ENCODE measurements at regions of chr7 and their contacts with region 1.

Region 1: GRCh38 chr7:134646425-134647305 is at the start of gene BPGM:
- DNase-seq: peak; percentile 98
- H3K4me3 Mint-ChIP-seq: no peak within 1 kb of the TSS
- H3K27ac Mint-ChIP-seq: no peak within 1 kb of the TSS
- H3K4me1 Mint-ChIP-seq: peaks cover 32% of the 10 kb centered on the region
- H3K27me3 Mint-ChIP-seq: no peaks in the 10 kb centered on the region
- total RNA-seq, gene BPGM: 23.7 to 24.9 TPM

Region 2: DNA sequence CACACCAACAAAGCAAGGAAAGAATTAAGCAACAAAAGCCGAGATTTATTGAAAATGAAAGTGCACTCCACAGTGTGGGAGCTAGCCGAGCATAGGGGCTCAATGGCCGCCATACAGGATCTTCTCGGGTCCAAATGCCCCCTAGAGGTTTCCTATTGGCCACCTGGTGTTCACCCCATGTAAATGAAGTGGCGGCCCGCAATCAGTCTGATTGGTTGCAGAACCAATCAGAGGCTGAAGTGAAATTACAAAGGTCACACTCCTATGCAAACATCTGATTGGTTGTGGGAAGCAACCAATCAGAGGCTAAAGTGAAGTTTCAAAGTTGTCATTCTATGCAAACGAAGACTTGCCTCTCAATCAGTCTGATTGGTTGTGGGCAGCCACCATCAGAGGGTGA is 268.1 kb before region 1 on chr7:
- CTCF ChIA-PET with region 1: no interaction called
- POLR2A ChIA-PET with region 1: no interaction called
- intact Hi-C with region 1: no loop called
- DNase-seq: no peak
- H3K4me3 Mint-ChIP-seq: no peak overlapping the region
- H3K27ac Mint-ChIP-seq: no peak overlapping the region
- H3K4me1 Mint-ChIP-seq: no peaks in the 10 kb centered on the region
- H3K27me3 Mint-ChIP-seq: peaks cover 3% of the 10 kb centered on the region

Region 3: GRCh38 chr7:134613623-134614347 is 32.9 kb before region 1 on chr7:
- CTCF ChIA-PET with region 1: no interaction called
- POLR2A ChIA-PET with region 1: interaction called, 4 read pairs
- intact Hi-C with region 1: loop called (anchors 1 kb)
- DNase-seq: peak; percentile 61
- H3K4me3 Mint-ChIP-seq: no peak overlapping the region
- H3K27ac Mint-ChIP-seq: no peak overlapping the region
- H3K4me1 Mint-ChIP-seq: peaks cover 12% of the 10 kb centered on the region
- H3K27me3 Mint-ChIP-seq: peaks cover 15% of the 10 kb centered on the region

Region 4: GRCh38 chr7:134669845-134670373 is 23.2 kb after region 1 on chr7:
- CTCF ChIA-PET with region 1: interaction called, 8 read pairs
- POLR2A ChIA-PET with region 1: interaction called, 4 read pairs
- intact Hi-C with region 1: loop called (anchors 1 kb)
- DNase-seq: peak; percentile 87
- H3K4me3 Mint-ChIP-seq: peak overlapping the region; percentile 27
- H3K27ac Mint-ChIP-seq: peak overlapping the region; percentile 74
- H3K4me1 Mint-ChIP-seq: peaks cover 48% of the 10 kb centered on the region
- H3K27me3 Mint-ChIP-seq: no peaks in the 10 kb centered on the region

Region 5: DNA sequence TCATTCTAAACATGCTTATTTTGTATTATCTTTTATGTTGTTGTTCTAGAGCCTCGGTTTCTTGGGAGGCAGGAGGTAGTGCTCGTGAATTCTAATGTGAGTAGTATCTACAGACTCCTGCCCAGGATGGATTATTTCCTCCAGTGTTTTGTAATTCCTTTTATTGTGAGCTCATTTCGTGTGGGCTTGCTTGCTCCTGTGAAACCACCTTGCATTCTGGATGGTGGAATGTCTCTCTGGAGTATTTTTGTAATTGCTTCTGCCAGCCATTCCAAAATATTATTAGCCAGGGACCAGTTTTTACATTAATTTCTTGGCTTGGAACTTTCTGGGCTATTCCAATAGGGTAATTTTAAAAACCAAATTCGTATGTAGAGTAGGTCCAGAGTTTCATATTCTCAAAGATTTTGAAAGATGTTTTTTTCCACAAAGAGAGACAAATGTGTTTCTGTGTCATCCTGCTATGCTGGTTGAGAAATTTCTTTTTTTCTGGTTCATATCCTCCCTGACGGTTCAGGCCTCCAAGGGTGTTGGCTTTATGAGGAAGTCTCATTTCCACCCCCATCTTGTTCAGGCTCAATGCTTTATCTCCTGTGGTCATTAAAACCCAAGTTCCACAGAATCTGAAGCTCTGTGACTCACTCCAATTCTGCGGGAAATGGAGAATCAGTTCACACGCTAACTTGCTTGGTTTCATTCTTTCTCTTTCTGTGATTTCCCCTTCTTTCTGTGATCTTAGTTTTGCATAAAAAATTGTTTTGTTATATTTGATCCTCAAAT is 91.1 kb after region 1 on chr7:
- CTCF ChIA-PET with region 1: no interaction called
- POLR2A ChIA-PET with region 1: interaction called, 4 read pairs
- intact Hi-C with region 1: loop called (anchors 1 kb)
- DNase-seq: peak; percentile 65
- H3K4me3 Mint-ChIP-seq: no peak overlapping the region
- H3K27ac Mint-ChIP-seq: peak overlapping the region; percentile 88
- H3K4me1 Mint-ChIP-seq: peaks cover 41% of the 10 kb centered on the region
- H3K27me3 Mint-ChIP-seq: no peaks in the 10 kb centered on the region

Region 6: DNA sequence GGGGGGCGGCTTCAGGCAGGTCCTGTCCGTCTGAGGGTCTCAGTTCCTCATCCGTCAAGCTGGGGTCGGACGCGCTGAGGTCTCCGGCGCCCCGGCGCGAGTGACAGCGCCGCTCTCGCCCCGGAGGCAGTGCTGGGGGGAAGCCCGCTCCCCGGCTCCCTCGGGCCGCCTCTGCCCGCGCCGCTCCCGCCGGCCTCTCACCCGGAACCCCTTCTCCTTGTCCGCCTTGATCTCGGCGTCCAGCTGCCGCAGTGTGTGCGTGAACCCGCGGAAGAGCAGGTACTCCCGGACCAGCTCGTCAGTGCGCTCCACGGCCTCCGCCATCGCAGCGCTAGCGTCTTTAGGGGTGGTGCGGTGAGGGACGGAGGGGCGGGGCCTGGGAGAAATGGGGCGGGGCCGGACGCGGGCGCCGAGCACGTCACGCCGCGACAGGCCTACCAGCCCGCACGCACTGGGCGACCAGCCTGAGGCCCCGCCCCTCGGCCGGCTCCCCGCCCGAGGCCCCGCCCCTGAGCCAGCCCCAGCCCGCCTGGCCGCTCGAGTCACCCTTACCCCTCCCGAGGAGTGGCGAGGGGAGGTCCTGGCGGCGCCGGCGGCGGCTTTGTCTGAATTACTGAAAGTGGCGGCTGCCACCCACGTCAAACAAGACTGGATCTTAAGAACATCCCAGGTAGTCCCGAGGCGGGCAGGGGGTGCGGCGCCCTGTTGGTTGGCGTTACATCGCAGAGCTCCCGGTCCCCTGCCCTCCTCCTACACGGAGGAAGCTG is 564.7 kb after region 1 on chr7 and contains the start of gene WDR91:
- CTCF ChIA-PET with region 1: no interaction called
- POLR2A ChIA-PET with region 1: no interaction called
- intact Hi-C with region 1: loop called (anchors 1 kb)
- DNase-seq: peak; percentile 98
- H3K4me3 Mint-ChIP-seq: peak within 1 kb of the TSS; percentile 93
- H3K27ac Mint-ChIP-seq: peak within 1 kb of the TSS; percentile 83
- H3K4me1 Mint-ChIP-seq: peaks cover 23% of the 10 kb centered on the region
- H3K27me3 Mint-ChIP-seq: no peaks in the 10 kb centered on the region
- total RNA-seq, gene WDR91: 10.3 to 11.0 TPM

Measured in activated CD4-positive, alpha-beta memory T cell treated with anti-CD3 and anti-CD28 coated beads for 36 hours (primary cell).